ENCODE measurements at regions of chr2 and their contacts with region 1.

Region 1: DNA sequence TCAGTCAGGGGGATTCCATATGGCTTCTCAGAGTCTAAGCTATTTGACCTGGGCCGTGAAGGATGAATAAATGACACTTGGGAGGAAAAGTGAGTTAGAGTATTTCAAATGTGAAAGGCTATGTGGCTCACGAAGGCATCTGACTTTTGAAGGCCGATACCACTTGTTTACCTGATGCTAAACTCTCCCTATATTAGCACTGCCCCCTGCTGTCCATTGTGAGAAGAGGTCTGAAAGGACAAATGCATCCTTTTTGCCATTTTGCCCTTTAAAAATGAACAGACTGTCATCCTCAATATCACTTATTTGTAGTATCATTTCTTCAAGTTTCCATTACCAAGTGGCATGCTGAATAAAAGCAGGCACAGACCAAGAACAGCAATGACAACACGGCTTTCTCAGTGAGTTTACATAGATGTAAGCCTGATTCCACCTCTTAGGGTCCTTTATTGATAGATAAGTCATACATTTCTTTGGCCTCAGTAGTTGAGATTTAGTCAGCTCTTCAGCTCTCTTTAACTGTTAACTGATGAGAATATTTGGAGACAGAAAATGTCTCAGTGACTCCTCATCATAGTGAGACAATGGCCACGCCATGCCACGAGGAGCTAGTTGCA is 40.1 kb downstream of the DOCK10 start:
- DNase-seq: peak; percentile 40 to 75 (median 58)
- H3K4me3 ChIP-seq: no peak overlapping the region
- H3K4me3 Mint-ChIP-seq: peak overlapping the region in 4 of 7 donors; percentile 21 to 57 (median 51)
- H3K27ac ChIP-seq: no peak overlapping the region
- H3K27ac Mint-ChIP-seq: peak overlapping the region; percentile 43 to 88 (median 82)
- H3K4me1 ChIP-seq: peaks cover 53% of the 10 kb centered on the region
- H3K4me1 Mint-ChIP-seq: peaks cover 60 to 95% (median 92%) of the 10 kb centered on the region in 3 donors
- H3K27me3 ChIP-seq: no peaks in the 10 kb centered on the region
- H3K27me3 Mint-ChIP-seq: no peaks in the 10 kb centered on the region

Region 2: DNA sequence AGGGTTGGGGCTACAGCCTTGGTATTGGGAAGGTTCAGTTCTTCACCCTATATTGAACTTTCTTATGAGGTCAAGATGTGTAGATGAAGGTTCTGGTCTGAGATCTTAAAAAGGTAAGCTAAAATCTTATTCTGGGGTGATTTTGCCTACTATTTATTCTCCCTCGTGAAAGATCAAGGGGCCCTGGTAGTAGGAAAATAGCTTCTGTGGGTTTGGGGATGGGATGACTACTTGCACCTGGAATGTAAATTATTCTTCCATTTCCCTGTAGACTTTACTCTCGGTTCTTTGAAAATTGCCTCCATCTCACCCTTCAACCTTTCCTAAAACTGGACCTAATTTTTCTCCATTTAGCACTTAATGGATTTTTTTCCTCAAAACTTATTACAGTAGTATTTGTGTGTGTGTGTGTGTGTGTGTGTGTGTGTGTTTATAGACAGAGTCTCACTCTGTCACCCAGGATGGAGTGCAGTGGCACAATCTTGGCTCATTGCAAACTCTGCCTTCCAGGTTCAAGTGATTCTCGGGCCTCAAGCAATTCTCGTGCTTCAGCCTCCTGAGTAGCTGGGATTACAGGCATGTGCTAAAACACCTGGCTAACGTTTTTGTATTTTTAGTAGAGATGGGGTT is 323.4 kb before region 1 on chr2:
- CTCF ChIA-PET with region 1: no interaction called
- POLR2A ChIA-PET with region 1: no interaction called
- DNase-seq: no peak
- H3K4me3 ChIP-seq: no peak overlapping the region
- H3K4me3 Mint-ChIP-seq: no peak overlapping the region
- H3K27ac ChIP-seq: no peak overlapping the region
- H3K27ac Mint-ChIP-seq: peak overlapping the region in 2 of 8 donors; percentile 21 to 43
- H3K4me1 ChIP-seq: no peaks in the 10 kb centered on the region
- H3K4me1 Mint-ChIP-seq: no peaks in the 10 kb centered on the region
- H3K27me3 ChIP-seq: no peaks in the 10 kb centered on the region
- H3K27me3 Mint-ChIP-seq: peaks cover 1 to 3% of the 10 kb centered on the region in 2 donors

Region 3: GRCh38 chr2:224927646-224928173 is 74.4 kb before region 1 on chr2:
- CTCF ChIA-PET with region 1: interaction called, 23 read pairs
- POLR2A ChIA-PET with region 1: no interaction called
- DNase-seq: peak; percentile 48 to 88 (median 81)
- H3K4me3 ChIP-seq: no peak overlapping the region
- H3K4me3 Mint-ChIP-seq: peak overlapping the region; percentile 42 to 80 (median 64)
- H3K27ac ChIP-seq: peak overlapping the region; percentile 69
- H3K27ac Mint-ChIP-seq: peak overlapping the region; percentile 90 to 99 (median 96)
- H3K4me1 ChIP-seq: peaks cover 98% of the 10 kb centered on the region
- H3K4me1 Mint-ChIP-seq: peaks cover 96 to 100% (median 99%) of the 10 kb centered on the region in 3 donors
- H3K27me3 ChIP-seq: no peaks in the 10 kb centered on the region
- H3K27me3 Mint-ChIP-seq: no peaks in the 10 kb centered on the region

Region 4: GRCh38 chr2:224934526-224935188 is 67.5 kb before region 1 on chr2:
- CTCF ChIA-PET with region 1: interaction called, 23 read pairs
- POLR2A ChIA-PET with region 1: no interaction called
- DNase-seq: no peak
- H3K4me3 ChIP-seq: no peak overlapping the region
- H3K4me3 Mint-ChIP-seq: peak overlapping the region in 2 of 7 donors; percentile 3 to 61
- H3K27ac ChIP-seq: no peak overlapping the region
- H3K27ac Mint-ChIP-seq: peak overlapping the region in 7 of 8 donors; percentile 1 to 85 (median 80)
- H3K4me1 ChIP-seq: peaks cover 83% of the 10 kb centered on the region
- H3K4me1 Mint-ChIP-seq: peaks cover 85 to 95% (median 95%) of the 10 kb centered on the region in 3 donors
- H3K27me3 ChIP-seq: no peaks in the 10 kb centered on the region
- H3K27me3 Mint-ChIP-seq: no peaks in the 10 kb centered on the region

Region 5: DNA sequence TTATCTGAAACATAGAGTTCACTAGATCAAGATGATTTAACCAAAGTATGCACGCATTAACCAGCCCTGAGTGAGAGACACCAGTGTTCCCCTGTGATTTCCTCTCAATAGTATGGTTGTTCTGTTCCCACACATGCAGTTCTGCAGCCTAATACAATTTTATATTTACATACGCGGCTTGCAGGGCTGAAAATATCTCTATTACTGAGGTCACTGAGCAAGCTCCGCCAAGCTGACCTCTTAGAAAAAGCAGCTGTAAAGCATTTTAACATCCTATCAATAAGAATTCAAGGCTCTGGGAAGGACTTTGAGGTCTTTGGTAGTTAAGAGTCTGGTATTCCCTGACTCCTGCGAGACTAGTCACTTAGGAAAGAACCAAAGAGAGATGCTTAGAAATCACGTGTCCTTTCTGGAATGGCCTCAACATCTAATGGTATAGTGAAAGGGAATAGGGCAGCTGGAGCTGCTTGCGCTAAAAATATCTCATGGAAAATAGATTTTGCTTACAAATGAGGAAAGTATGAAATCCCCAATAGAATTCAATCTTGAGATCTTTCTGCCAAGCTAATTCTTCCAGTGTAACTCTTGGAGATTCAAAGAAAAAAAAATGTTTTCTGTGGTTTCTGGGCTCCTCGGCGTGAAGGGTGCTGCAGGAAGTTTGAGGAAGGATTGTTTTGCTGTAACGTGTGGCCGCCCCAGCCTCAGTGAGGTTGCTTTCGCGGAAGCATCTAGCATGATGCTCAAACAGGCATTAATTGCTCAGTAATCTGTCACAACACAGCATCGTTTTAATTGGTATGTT is 19.0 kb before region 1 on chr2:
- CTCF ChIA-PET with region 1: interaction called, 64 read pairs
- POLR2A ChIA-PET with region 1: no interaction called
- DNase-seq: peak in 3 of 5 donors; percentile 30 to 55 (median 55)
- H3K4me3 ChIP-seq: no peak overlapping the region
- H3K4me3 Mint-ChIP-seq: peak overlapping the region in 6 of 7 donors; percentile 66 to 84 (median 76)
- H3K27ac ChIP-seq: no peak overlapping the region
- H3K27ac Mint-ChIP-seq: peak overlapping the region; percentile 51 to 96 (median 83)
- H3K4me1 ChIP-seq: peaks cover 63% of the 10 kb centered on the region
- H3K4me1 Mint-ChIP-seq: peaks cover 79 to 93% (median 92%) of the 10 kb centered on the region in 3 donors
- H3K27me3 ChIP-seq: no peaks in the 10 kb centered on the region
- H3K27me3 Mint-ChIP-seq: no peaks in the 10 kb centered on the region

Measured in CD8-positive, alpha-beta memory T cell (primary cell).